ENCODE measurements at regions of chrX and their contacts with region 1.

Region 1: GRCh38 chrX:66255359-66255967 is 91.4 kb downstream of the HEPH start:
- ATAC-seq: no peak
- H3K4me3 ChIP-seq: no peak overlapping the region
- H3K27ac ChIP-seq: no peak overlapping the region
- H3K4me1 ChIP-seq: no peaks in the 10 kb centered on the region

Region 2: DNA sequence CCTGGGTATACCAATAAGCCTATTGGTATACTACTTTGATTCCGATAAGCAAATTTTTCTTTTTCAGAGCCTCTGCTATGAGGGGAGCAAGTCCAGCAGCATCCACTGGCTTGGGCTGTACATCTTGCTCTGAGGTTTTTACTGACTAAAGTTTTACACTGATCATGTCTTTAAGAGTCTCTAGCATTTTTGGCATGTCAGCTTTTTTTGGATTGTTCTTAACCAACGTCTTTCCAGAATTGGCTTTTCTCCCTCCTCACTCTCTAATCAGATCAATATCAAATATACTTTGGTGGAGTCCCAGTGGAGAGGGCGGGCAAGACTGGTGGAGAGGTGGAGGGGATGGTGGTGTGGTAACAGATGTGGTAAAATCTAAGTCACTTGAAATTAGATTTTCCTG is 105.4 kb after region 1 on chrX:
- in situ Hi-C with region 1: loop called in 1 of 9 experiments (anchors 25 kb)
- ATAC-seq: no peak
- H3K4me3 ChIP-seq: no peak overlapping the region
- H3K27ac ChIP-seq: no peak overlapping the region
- H3K4me1 ChIP-seq: no peaks in the 10 kb centered on the region

Measured in motor neuron (in vitro differentiated cells).